ENCODE measurements at regions of chr4 and their contacts with region 1.

Region 1: GRCh38 chr4:76949276-76950051 is at the start of gene SEPTIN11:
- DNase-seq: peak; percentile 63
- H3K4me3 ChIP-seq: peak within 1 kb of the TSS; percentile 91
- CTCF ChIP-seq: no peak

Region 2: DNA sequence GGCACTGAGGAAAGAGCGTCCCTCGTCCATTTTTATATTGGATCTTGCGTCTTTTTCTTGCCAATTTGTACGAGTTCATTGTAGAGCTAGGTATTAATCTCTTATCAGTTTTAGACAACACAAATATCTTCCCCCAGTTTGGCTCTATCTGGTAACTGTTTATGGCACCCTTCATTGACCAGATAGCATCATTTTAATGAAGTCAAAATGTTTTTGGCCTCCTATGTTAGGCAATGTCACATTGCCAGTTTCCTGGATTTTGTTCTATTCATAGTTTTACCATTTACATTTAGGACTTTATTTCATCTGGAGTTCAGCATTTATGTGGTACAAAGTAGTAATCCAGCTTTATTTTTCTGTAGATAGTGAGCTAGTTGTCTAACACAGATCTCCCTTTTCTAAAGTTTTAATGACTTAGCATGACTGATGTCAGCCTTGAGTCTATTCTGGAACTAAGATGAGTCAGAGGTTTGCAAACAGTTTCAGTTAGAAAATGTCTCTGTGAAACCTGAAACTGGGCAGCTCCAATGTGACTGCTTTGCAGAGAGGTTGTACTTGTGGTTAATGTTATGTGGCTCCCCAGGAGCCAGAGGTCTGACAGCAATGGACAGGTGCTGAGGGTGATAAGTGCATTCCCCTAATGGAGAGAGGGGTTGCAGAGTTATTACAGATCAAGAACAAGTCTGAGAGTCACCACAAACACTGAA is 648.2 kb before region 1 on chr4:
- CTCF ChIA-PET with region 1: no interaction called
- POLR2A ChIA-PET with region 1: no interaction called
- DNase-seq: peak; percentile 54
- H3K4me3 ChIP-seq: no peak overlapping the region
- CTCF ChIP-seq: no peak

Region 3: DNA sequence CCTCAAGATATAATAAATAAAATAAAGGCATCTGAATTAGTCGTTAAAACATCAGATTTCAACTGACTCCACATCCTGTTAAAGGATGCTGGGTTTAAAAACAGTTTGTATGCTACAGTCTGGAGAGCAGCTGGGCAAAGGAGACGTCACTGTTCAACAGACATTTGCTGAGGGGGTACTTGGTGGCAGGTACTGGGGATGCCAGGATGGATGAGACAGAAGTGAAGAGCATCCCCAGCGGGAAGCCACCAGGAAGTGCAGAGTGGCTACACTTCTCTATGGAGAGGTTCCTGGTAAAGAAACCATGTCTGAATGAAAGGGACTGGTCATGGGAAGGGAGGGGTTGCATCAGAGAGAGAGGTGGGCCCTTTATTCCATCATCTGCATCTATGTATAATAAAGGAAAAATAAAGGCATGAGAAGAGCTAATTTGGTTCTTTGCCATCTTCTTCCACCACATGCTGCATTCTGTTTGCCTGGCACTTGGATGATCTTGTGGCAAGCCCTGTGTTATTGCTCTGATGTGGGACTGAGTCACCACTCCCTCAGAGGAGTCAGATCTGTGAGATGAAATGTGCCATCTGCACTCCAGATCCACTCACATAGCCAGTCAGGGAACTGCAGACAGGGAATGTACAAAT is 196.5 kb before region 1 on chr4:
- CTCF ChIA-PET with region 1: interaction called, 5 read pairs
- POLR2A ChIA-PET with region 1: interaction called, 16 read pairs
- DNase-seq: peak; percentile 98
- H3K4me3 ChIP-seq: peak overlapping the region; percentile 24
- CTCF ChIP-seq: no peak

Region 4: GRCh38 chr4:76987153-76987587 is 37.7 kb after region 1 on chr4:
- CTCF ChIA-PET with region 1: no interaction called
- POLR2A ChIA-PET with region 1: interaction called, 16 read pairs
- DNase-seq: peak; percentile 98
- H3K4me3 ChIP-seq: peak overlapping the region; percentile 15
- CTCF ChIP-seq: peak; percentile 24

Region 5: GRCh38 chr4:77052352-77052751 is 102.9 kb after region 1 on chr4:
- CTCF ChIA-PET with region 1: no interaction called
- POLR2A ChIA-PET with region 1: no interaction called
- DNase-seq: peak; percentile 46
- H3K4me3 ChIP-seq: no peak overlapping the region
- CTCF ChIP-seq: peak; percentile 44